Esophagus muscularis mucosa (tissue), 4 donors: ENCODE measurements at regions of chr12 and their contacts with region 1.

Region 1: DNA sequence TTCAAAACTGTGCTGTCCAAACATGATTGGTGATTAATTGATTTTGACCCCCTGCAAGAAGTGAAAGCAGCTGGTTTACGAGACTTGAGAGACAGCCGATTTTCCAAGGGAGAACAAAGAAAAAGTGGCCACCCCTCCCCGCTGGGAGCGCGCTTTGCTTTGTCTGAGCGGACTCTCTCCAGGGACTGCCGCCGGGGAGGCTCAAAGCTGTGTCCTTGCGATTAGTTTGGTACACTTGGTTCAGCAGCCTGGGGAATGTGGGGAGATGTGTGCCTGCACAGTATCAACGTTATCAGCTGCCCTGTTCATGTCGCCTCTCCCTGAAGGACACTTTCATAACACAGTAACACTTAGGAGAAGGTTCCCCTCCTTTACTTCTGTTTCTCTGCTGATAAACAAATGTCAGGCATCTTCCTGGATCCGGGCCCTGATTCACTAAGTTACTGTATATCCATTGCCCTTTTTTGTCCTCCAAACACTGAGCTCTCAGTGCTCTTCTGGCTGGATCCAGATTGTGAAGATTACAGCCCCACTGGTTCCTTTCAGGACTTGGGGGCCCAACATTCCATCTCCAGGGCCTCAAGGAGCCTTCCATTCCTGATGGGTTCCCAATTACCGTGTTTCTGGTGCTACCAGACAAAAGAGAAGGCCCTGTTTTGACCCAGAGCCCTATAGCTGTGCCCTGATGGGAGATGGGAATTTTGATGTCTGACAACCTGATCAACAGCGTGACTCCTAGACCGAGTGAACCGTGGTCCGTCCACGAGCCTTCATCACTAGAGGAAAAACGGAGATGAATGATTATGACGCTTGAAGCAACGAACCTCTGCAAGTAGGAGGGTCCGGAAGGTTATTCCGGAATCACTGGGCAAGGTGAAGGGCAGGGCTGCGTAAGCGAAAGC is 31.7 kb upstream of the TUBA1C start:
- DNase-seq: no peak
- H3K4me3 ChIP-seq: peak overlapping the region; percentile 53 to 64 (median 59)
- H3K27ac ChIP-seq: peak overlapping the region; percentile 88 to 91 (median 91)
- H3K4me1 ChIP-seq: peaks cover 25 to 37% (median 30%) of the 10 kb centered on the region in 4 donors
- H3K27me3 ChIP-seq: no peaks in the 10 kb centered on the region
- CTCF ChIP-seq: peak; percentile 12 to 32 (median 27)
- EP300 ChIP-seq: no peak
- POLR2A ChIP-seq: no peak

Region 2: DNA sequence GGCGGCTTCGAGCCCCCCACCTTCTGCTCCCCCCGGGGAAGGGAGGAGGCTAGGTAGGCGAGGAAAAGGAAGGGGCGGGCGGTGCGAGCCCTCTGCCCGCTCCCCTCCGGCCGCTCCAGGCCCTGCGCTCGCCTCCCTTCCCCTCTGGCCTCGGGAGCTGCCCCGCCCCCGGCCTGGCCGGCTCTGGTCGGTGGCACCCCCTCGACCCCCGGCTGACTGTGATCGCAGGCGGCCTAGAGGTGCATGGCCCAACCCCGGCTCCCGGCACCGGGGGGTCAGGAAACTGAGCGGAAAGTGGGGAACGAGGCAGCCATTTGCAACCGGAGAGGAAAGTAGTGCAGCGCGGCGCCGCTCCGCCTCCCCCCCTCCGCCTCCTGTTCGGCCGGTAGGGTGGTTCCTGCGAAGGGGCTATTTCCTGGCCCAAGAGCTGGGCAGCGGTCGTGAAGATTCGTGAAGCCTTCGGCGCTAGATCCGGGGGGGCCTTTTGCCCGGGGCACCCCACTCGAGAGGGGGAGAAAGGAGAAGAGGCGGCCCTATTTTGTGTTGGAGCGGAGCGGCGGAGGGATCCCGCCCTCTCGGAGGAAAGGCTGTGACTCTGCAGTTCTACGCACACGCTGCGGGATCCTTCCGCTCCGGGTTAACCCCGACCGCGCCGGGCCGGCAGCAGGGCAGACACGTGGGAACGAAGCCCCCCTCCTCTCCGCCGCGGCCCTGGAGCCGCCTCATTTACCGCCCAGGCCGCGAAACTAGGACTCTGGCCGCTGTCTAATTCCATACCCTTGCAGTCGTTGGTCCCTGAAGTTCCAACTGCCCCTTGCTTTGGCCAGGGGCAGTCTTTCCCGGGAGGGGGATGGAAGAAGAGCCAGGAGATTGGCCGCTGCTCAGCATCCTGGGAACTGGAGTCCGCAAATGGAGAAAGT is 172.7 kb before region 1 on chr12 and contains the start of gene KMT2D:
- intact Hi-C with region 1: loop called (anchors 5 kb)
- DNase-seq: peak; percentile 96
- H3K4me3 ChIP-seq: peak within 1 kb of the TSS; percentile 77 to 100 (median 98)
- H3K27ac ChIP-seq: peak within 1 kb of the TSS; percentile 96 to 98 (median 96)
- H3K4me1 ChIP-seq: peaks cover 34 to 58% (median 51%) of the 10 kb centered on the region in 4 donors
- H3K27me3 ChIP-seq: no peaks in the 10 kb centered on the region
- CTCF ChIP-seq: peak in 2 of 3 experiments; percentile 40 to 43
- EP300 ChIP-seq: no peak
- POLR2A ChIP-seq: peak; percentile 44
- total RNA-seq, gene KMT2D: 47.2 to 85.2 (median 76.2) TPM

Region 3: GRCh38 chr12:49110464-49111155 is 122.6 kb before region 1 on chr12 and contains the start of gene LMBR1L:
- intact Hi-C with region 1: loop called (anchors 5 kb)
- DNase-seq: peak; percentile 100
- H3K4me3 ChIP-seq: peak within 1 kb of the TSS; percentile 74 to 89 (median 80)
- H3K27ac ChIP-seq: peak within 1 kb of the TSS; percentile 94 to 99 (median 96)
- H3K4me1 ChIP-seq: peaks cover 38 to 50% (median 48%) of the 10 kb centered on the region in 4 donors
- H3K27me3 ChIP-seq: no peaks in the 10 kb centered on the region
- CTCF ChIP-seq: peak; percentile 23 to 62 (median 59)
- EP300 ChIP-seq: no peak
- POLR2A ChIP-seq: peak; percentile 68
- total RNA-seq, gene LMBR1L: 24.7 to 54.0 (median 34.3) TPM

Region 4: GRCh38 chr12:49130151-49131050 is 102.8 kb before region 1 on chr12:
- intact Hi-C with region 1: loop called (anchors 1 kb)
- DNase-seq: peak; percentile 98
- H3K4me3 ChIP-seq: peak overlapping the region; percentile 79 to 100 (median 99)
- H3K27ac ChIP-seq: peak overlapping the region; percentile 99 to 100 (median 100)
- H3K4me1 ChIP-seq: peaks cover 20 to 42% (median 38%) of the 10 kb centered on the region in 4 donors
- H3K27me3 ChIP-seq: no peaks in the 10 kb centered on the region
- CTCF ChIP-seq: peak; percentile 89 to 94 (median 92)
- EP300 ChIP-seq: no peak
- POLR2A ChIP-seq: peak; percentile 11

Region 5: GRCh38 chr12:49188914-49189367 is 44.2 kb before region 1 on chr12 and contains the start of gene TUBA1A:
- intact Hi-C with region 1: loop called (anchors 1 kb)
- DNase-seq: peak; percentile 99
- H3K4me3 ChIP-seq: peak within 1 kb of the TSS; percentile 78 to 96 (median 91)
- H3K27ac ChIP-seq: peak within 1 kb of the TSS; percentile 95 to 100 (median 98)
- H3K4me1 ChIP-seq: peaks cover 16 to 42% (median 34%) of the 10 kb centered on the region in 4 donors
- H3K27me3 ChIP-seq: no peaks in the 10 kb centered on the region
- CTCF ChIP-seq: no peak
- EP300 ChIP-seq: no peak
- POLR2A ChIP-seq: peak; percentile 83
- total RNA-seq, gene TUBA1A: 534 to 1,110 (median 887) TPM

Region 6: DNA sequence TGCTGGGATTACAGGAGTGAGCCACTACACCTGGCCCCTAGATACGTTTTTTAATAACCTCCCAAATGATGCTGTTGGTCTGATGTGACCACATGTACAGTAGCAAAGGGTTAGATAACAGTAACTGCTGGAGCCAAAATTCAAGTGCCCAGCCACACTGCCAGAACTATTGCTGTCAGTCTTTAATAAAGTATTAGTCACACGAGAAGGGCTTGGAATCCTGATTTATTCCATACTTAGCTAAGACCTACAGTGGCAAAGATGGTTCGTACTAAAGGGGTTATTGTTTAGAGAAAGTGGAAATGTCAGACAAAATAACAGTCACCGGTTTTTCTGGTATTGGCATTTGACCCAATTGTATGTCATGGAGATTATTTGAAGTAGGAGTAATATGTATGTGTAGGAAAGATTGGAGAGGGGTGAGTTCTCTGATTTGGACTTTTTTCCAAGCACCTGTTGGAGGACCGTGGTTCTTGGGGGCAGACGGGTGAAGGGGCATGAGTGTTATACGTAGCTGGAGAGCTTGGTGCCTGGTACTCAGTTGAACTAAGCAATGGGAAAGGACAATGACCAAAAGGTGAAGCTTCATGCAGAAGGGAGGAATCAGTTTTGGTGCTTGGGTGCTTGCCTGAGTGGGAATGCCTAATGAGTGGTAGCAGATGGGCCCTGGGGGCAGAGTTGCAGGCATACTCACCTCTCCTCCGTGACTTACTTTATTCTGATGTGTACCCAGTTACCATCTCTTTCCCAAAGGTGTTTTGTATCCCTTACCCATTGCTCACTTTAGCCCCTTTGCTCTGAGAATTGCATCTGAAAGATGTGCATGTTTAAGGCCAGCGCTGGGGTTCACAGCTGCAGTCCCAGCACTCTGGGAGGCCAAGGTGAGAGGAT is 41.5 kb after region 1 on chr12:
- intact Hi-C with region 1: no loop called
- DNase-seq: no peak
- H3K4me3 ChIP-seq: no peak overlapping the region
- H3K27ac ChIP-seq: no peak overlapping the region
- H3K4me1 ChIP-seq: no peaks in the 10 kb centered on the region
- H3K27me3 ChIP-seq: no peaks in the 10 kb centered on the region
- CTCF ChIP-seq: no peak
- EP300 ChIP-seq: no peak
- POLR2A ChIP-seq: no peak